ENCODE measurements at regions of chr1 and their contacts with region 1.

Region 1: GRCh38 chr1:116919802-116920201 is 10.1 kb downstream of the PTGFRN start:
- DNase-seq: peak in 1 of 2 experiments; percentile 33
- H3K4me3 ChIP-seq: no peak overlapping the region
- H3K4me3 Mint-ChIP-seq: no peak overlapping the region
- H3K27ac Mint-ChIP-seq: no peak overlapping the region
- H3K4me1 ChIP-seq: peaks cover 11% of the 10 kb centered on the region
- H3K4me1 Mint-ChIP-seq: peaks cover 8% of the 10 kb centered on the region
- H3K27me3 ChIP-seq: no peaks in the 10 kb centered on the region
- H3K27me3 Mint-ChIP-seq: no peaks in the 10 kb centered on the region
- CTCF ChIP-seq: peak in 1 of 2 experiments; percentile 13

Region 2: GRCh38 chr1:116842654-116843053 is 77.1 kb before region 1 on chr1:
- CTCF ChIA-PET with region 1: interaction called, 3 read pairs
- POLR2A ChIA-PET with region 1: no interaction called
- intact Hi-C with region 1: loop called (anchors 5 kb)
- DNase-seq: peak in 1 of 2 experiments; percentile 13
- H3K4me3 ChIP-seq: no peak overlapping the region
- H3K4me3 Mint-ChIP-seq: no peak overlapping the region
- H3K27ac Mint-ChIP-seq: no peak overlapping the region
- H3K4me1 ChIP-seq: no peaks in the 10 kb centered on the region
- H3K4me1 Mint-ChIP-seq: no peaks in the 10 kb centered on the region
- H3K27me3 ChIP-seq: no peaks in the 10 kb centered on the region
- H3K27me3 Mint-ChIP-seq: no peaks in the 10 kb centered on the region
- CTCF ChIP-seq: peak in 1 of 2 experiments; percentile 13

Measured in Caco-2 (cell line).